ENCODE measurements at regions of chr19 and their contacts with region 1.

Region 1: GRCh38 chr19:18203863-18204393 is at the start of gene RAB3A:
- DNase-seq: peak; percentile 100
- ATAC-seq: peak; percentile 91
- H3K4me3 Mint-ChIP-seq: peak within 1 kb of the TSS; percentile 95
- H3K27ac Mint-ChIP-seq: peak within 1 kb of the TSS; percentile 99
- H3K4me1 Mint-ChIP-seq: peaks cover 22% of the 10 kb centered on the region
- H3K27me3 Mint-ChIP-seq: no peaks in the 10 kb centered on the region
- CTCF ChIP-seq: no peak
- total RNA-seq, gene RAB3A: 12.2 to 14.7 TPM (median 14.6 TPM) in 3 replicates

Region 2: GRCh38 chr19:18192673-18193387 is 11.1 kb before region 1 on chr19 and contains the start of gene MPV17L2:
- CTCF ChIA-PET with region 1: interaction called, 27 read pairs
- POLR2A ChIA-PET with region 1: interaction called, 5 read pairs
- DNase-seq: peak; percentile 99
- ATAC-seq: peak; percentile 94
- H3K4me3 Mint-ChIP-seq: peak within 1 kb of the TSS; percentile 82
- H3K27ac Mint-ChIP-seq: peak within 1 kb of the TSS; percentile 97
- H3K4me1 Mint-ChIP-seq: peaks cover 20% of the 10 kb centered on the region
- H3K27me3 Mint-ChIP-seq: peaks cover 2% of the 10 kb centered on the region; the same call in 1 of the 2 replicates
- CTCF ChIP-seq: no peak
- total RNA-seq, gene MPV17L2: 26.3 to 29.8 TPM (median 28.0 TPM) in 3 replicates

Region 3: GRCh38 chr19:18233224-18233825 is 29.4 kb after region 1 on chr19:
- CTCF ChIA-PET with region 1: interaction called, 77 read pairs
- POLR2A ChIA-PET with region 1: interaction called, 21 read pairs
- DNase-seq: peak; percentile 93
- ATAC-seq: peak; percentile 79
- H3K4me3 Mint-ChIP-seq: peak overlapping the region; percentile 78
- H3K27ac Mint-ChIP-seq: no peak overlapping the region
- H3K4me1 Mint-ChIP-seq: peaks cover 31% of the 10 kb centered on the region
- H3K27me3 Mint-ChIP-seq: peaks cover 12% of the 10 kb centered on the region
- CTCF ChIP-seq: no peak

Region 4: DNA sequence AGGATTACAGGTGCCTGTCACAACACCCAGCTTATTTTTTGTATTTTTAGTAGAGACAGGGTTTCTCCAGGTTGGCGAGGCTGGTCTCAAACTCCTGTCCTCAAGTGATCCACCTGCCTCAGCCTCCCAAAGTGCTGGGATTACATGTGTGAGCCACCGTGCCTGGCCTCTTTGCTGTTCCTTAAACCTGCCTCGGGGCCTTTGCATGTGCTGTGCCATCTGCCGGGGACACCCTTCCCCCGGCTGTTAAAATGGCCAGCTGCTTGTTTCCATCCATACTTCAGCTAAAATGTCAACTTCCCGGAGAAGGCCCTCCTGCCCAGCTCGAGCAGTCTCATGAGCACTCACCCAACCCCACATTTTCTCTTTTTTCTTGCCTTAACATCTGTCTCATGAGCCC is 41.4 kb after region 1 on chr19:
- CTCF ChIA-PET with region 1: interaction called, 369 read pairs
- POLR2A ChIA-PET with region 1: no interaction called
- DNase-seq: no peak
- ATAC-seq: no peak
- H3K4me3 Mint-ChIP-seq: no peak overlapping the region
- H3K27ac Mint-ChIP-seq: no peak overlapping the region
- H3K4me1 Mint-ChIP-seq: peaks cover 6% of the 10 kb centered on the region
- H3K27me3 Mint-ChIP-seq: peaks cover 9% of the 10 kb centered on the region; the same call in 1 of the 2 replicates
- CTCF ChIP-seq: no peak

Region 5: GRCh38 chr19:18291590-18292461 is 87.9 kb after region 1 on chr19:
- CTCF ChIA-PET with region 1: interaction called, 14 read pairs
- POLR2A ChIA-PET with region 1: interaction called, 4 read pairs
- DNase-seq: peak; percentile 73
- ATAC-seq: peak; percentile 14
- H3K4me3 Mint-ChIP-seq: peak overlapping the region; percentile 83
- H3K27ac Mint-ChIP-seq: peak overlapping the region; percentile 99
- H3K4me1 Mint-ChIP-seq: peaks cover 48% of the 10 kb centered on the region
- H3K27me3 Mint-ChIP-seq: peaks cover 3% of the 10 kb centered on the region; the same call in 1 of the 2 replicates
- CTCF ChIP-seq: no peak

Region 6: DNA sequence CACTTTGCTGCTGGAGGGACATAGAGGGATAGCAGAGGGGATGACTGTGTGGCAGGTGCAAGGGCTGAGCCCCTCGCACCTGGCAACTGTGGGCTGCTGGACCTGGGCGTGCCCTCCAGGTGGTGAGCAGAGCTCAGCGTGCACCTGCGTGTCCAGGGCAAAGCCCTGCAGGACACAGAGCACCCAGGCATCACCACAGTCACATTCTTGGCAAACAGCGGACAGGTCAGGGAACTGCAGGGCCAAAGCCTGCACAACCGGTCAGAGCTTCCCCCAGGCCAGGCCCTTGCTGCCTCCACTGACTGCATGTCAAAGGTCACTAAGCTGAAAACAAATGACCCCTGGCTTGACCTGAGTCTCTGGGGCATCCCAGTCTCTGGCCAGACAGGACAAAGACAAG is 243.0 kb after region 1 on chr19:
- CTCF ChIA-PET with region 1: no interaction called
- POLR2A ChIA-PET with region 1: no interaction called
- DNase-seq: no peak
- ATAC-seq: no peak
- H3K4me3 Mint-ChIP-seq: no peak overlapping the region
- H3K27ac Mint-ChIP-seq: no peak overlapping the region
- H3K4me1 Mint-ChIP-seq: no peaks in the 10 kb centered on the region
- H3K27me3 Mint-ChIP-seq: no peaks in the 10 kb centered on the region
- CTCF ChIP-seq: no peak